CD8-positive, alpha-beta T cell (primary cell): ENCODE measurements at regions of chr11 and their contacts with region 1.

Region 1: GRCh38 chr11:28713850-28714249 is 605.7 kb downstream of the METTL15 start:
- DNase-seq: no peak
- ATAC-seq: no peak
- H3K4me3 ChIP-seq: no peak overlapping the region
- H3K4me3 Mint-ChIP-seq: no peak overlapping the region
- H3K27ac ChIP-seq: no peak overlapping the region
- H3K27ac Mint-ChIP-seq: no peak overlapping the region
- H3K4me1 ChIP-seq: no peaks in the 10 kb centered on the region
- H3K4me1 Mint-ChIP-seq: no peaks in the 10 kb centered on the region
- H3K27me3 ChIP-seq: no peaks in the 10 kb centered on the region
- H3K27me3 Mint-ChIP-seq: no peaks in the 10 kb centered on the region
- CTCF ChIP-seq: no peak

Region 2: GRCh38 chr11:27618281-27618915 is 1095.5 kb before region 1 on chr11:
- CTCF ChIA-PET with region 1: no interaction called
- POLR2A ChIA-PET with region 1: no interaction called
- intact Hi-C with region 1: loop called in 1 of 2 experiments (anchors 10 kb)
- DNase-seq: no peak
- ATAC-seq: no peak
- H3K4me3 ChIP-seq: no peak overlapping the region
- H3K4me3 Mint-ChIP-seq: no peak overlapping the region
- H3K27ac ChIP-seq: no peak overlapping the region
- H3K27ac Mint-ChIP-seq: no peak overlapping the region
- H3K4me1 ChIP-seq: no peaks in the 10 kb centered on the region
- H3K4me1 Mint-ChIP-seq: no peaks in the 10 kb centered on the region
- H3K27me3 ChIP-seq: no peaks in the 10 kb centered on the region
- H3K27me3 Mint-ChIP-seq: no peaks in the 10 kb centered on the region
- CTCF ChIP-seq: no peak

Region 3: GRCh38 chr11:28738549-28738948 is 24.7 kb after region 1 on chr11:
- CTCF ChIA-PET with region 1: no interaction called
- POLR2A ChIA-PET with region 1: no interaction called
- intact Hi-C with region 1: no loop called
- DNase-seq: no peak
- ATAC-seq: no peak
- H3K4me3 ChIP-seq: no peak overlapping the region
- H3K4me3 Mint-ChIP-seq: no peak overlapping the region
- H3K27ac ChIP-seq: no peak overlapping the region
- H3K27ac Mint-ChIP-seq: no peak overlapping the region
- H3K4me1 ChIP-seq: no peaks in the 10 kb centered on the region
- H3K4me1 Mint-ChIP-seq: no peaks in the 10 kb centered on the region
- H3K27me3 ChIP-seq: no peaks in the 10 kb centered on the region
- H3K27me3 Mint-ChIP-seq: no peaks in the 10 kb centered on the region
- CTCF ChIP-seq: no peak

Region 4: DNA sequence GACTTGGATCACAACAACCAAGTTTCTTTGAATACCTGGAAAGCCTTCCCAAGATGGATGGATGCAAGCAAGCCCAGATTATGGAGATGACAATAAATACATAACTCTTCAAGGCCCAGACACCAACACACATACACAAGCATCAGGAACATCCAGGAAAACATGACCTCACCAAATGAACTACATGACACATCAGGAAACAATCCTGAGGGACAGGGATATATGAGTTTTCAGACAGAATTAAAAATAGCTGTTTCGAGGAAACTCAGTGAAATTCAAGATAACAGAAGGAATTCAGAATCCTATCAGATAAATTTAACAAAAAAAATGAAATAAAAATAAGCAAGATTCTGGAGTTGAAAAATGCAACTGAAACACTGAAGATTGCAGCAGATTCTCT is 53.7 kb after region 1 on chr11:
- CTCF ChIA-PET with region 1: no interaction called
- POLR2A ChIA-PET with region 1: no interaction called
- intact Hi-C with region 1: no loop called
- DNase-seq: no peak
- ATAC-seq: no peak
- H3K4me3 ChIP-seq: no peak overlapping the region
- H3K4me3 Mint-ChIP-seq: no peak overlapping the region
- H3K27ac ChIP-seq: no peak overlapping the region
- H3K27ac Mint-ChIP-seq: no peak overlapping the region
- H3K4me1 ChIP-seq: no peaks in the 10 kb centered on the region
- H3K4me1 Mint-ChIP-seq: no peaks in the 10 kb centered on the region
- H3K27me3 ChIP-seq: no peaks in the 10 kb centered on the region
- H3K27me3 Mint-ChIP-seq: no peaks in the 10 kb centered on the region
- CTCF ChIP-seq: no peak